ENCODE measurements at regions of chr9 and their contacts with region 1.

Region 1: DNA sequence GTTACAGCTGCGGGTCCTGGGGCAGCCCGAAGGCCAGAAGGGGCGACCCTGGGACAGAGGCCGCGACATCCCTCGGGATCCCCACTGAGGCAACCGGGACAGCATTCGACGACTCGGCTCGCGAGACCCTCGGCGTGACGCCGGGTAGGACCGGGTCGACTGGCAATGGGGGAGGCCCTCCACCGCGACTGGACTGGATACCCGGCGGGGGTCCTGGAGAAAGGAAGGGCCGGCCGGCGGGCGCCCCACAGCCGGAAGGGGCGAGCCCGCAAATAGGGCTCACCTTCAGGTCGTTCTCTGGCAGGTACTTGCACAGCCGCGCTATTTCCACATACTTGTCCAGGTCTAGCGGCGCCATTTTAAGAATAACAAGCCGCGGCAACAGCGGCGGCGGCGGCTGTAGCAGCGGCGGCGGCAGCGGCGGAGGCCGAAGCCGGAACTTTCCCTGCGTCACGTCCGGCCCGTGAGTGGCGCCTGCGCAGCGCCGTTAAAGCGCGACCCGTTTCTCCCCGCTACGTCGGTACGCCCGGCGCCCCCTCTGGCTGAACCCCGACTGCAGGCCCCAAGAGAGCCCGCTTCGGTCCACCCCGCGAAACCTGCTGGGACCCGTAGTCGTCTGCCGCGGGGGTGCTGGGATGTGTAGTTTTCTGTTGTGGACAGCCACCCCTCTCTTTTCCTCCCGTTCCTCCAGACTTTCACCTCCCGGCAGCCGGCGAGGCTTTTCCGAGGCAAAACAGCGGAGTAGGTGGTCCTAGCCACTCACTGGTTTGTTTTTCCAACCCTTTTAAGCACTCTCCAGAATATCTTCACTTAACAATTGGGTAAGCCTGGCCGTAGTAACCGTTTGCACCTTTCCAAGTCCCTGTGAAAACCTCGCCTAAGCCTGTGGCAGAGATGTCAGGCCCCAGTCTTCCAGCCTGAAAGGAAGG is at the start of gene PPP6C:
- DNase-seq: peak; percentile 95 to 98 (median 96)
- H3K4me3 ChIP-seq: peak within 1 kb of the TSS; percentile 84 to 100
- H3K4me3 Mint-ChIP-seq: peak within 1 kb of the TSS; percentile 89 to 98 (median 94)
- H3K27ac ChIP-seq: peak within 1 kb of the TSS; percentile 97
- H3K27ac Mint-ChIP-seq: peak within 1 kb of the TSS; percentile 89 to 97 (median 94)
- H3K4me1 ChIP-seq: peaks cover 81% of the 10 kb centered on the region
- H3K4me1 Mint-ChIP-seq: peaks cover 20 to 75% (median 48%) of the 10 kb centered on the region in 4 donors
- H3K27me3 ChIP-seq: no peaks in the 10 kb centered on the region
- H3K27me3 Mint-ChIP-seq: no peaks in the 10 kb centered on the region
- total RNA-seq, gene PPP6C: 49.2 TPM

Region 2: DNA sequence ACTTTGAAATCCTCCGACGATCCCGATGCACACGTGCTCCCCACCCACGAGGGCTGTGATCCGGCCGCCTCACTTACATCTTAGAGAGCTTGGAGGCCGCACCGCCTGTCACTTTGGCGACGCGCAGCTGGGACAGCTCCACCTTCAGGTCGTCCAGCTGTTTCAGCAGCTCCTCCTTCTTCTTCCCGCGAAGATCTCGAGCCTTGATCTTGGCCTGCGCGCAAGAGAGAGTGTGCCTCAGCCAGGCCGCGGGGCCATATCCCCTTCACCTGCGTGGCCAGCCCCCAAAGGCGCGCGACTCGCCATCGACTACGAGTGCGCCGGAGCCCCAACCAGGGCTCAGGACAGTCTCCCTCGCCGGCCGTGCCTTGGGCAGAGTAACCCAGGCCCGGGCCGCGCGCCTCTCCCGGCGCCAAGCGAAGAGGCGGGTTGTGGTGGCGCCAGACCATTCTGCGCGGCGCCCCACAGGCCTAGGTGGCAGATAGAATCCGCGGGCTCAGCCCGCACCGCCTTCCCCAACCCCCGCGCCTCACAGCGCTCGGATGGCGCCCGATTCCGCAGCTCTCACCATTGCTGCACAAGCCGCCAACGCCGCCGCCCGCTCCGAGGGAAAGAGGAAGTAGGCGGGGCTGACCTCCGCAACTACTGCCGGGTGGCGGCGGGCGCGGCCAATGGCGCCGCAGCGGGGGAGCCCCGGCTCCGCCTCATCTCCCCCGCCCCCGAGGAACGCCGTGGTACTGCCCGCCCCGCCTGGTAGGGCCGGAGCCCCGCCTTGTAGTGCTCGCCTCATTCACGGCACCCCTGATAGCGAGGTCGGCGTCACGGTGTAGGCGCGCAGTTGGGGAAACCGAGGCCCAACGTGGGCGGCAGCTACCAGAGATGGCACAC is 328.0 kb before region 1 on chr9 and contains the starts of genes ARPC5L and RPL35:
- CTCF ChIA-PET with region 1: no interaction called
- POLR2A ChIA-PET with region 1: interaction called, 4 read pairs
- intact Hi-C with region 1: loop called (anchors 2 kb)
- DNase-seq: peak; percentile 95 to 96 (median 95)
- H3K4me3 ChIP-seq: peak within 1 kb of the TSS; percentile 78 to 84
- H3K4me3 Mint-ChIP-seq: peak within 1 kb of the TSS; percentile 91 to 100 (median 96)
- H3K27ac ChIP-seq: peak within 1 kb of the TSS; percentile 95
- H3K27ac Mint-ChIP-seq: peak within 1 kb of the TSS; percentile 92 to 99 (median 98)
- H3K4me1 ChIP-seq: peaks cover 26% of the 10 kb centered on the region
- H3K4me1 Mint-ChIP-seq: peaks cover 20 to 41% (median 29%) of the 10 kb centered on the region in 4 donors
- H3K27me3 ChIP-seq: no peaks in the 10 kb centered on the region
- H3K27me3 Mint-ChIP-seq: no peaks in the 10 kb centered on the region
- total RNA-seq, gene ARPC5L: 26.8 to 31.4 TPM
- total RNA-seq, gene RPL35: 1,702 to 1,766 TPM

Region 3: GRCh38 chr9:125143375-125144090 is 46.1 kb before region 1 on chr9 and contains the start of gene SCAI:
- CTCF ChIA-PET with region 1: no interaction called
- POLR2A ChIA-PET with region 1: interaction called, 4 read pairs
- intact Hi-C with region 1: loop called (anchors 1 kb)
- DNase-seq: peak; percentile 97 to 99 (median 99)
- H3K4me3 ChIP-seq: peak within 1 kb of the TSS in 1 of 2 donors; percentile 49
- H3K4me3 Mint-ChIP-seq: peak within 1 kb of the TSS; percentile 93 to 99 (median 98)
- H3K27ac ChIP-seq: peak within 1 kb of the TSS; percentile 16
- H3K27ac Mint-ChIP-seq: peak within 1 kb of the TSS; percentile 85 to 95 (median 91)
- H3K4me1 ChIP-seq: peaks cover 22% of the 10 kb centered on the region
- H3K4me1 Mint-ChIP-seq: peaks cover 17 to 34% (median 26%) of the 10 kb centered on the region in 4 donors
- H3K27me3 ChIP-seq: no peaks in the 10 kb centered on the region
- H3K27me3 Mint-ChIP-seq: no peaks in the 10 kb centered on the region
- total RNA-seq, gene SCAI: 14.7 to 15.5 TPM

Region 4: DNA sequence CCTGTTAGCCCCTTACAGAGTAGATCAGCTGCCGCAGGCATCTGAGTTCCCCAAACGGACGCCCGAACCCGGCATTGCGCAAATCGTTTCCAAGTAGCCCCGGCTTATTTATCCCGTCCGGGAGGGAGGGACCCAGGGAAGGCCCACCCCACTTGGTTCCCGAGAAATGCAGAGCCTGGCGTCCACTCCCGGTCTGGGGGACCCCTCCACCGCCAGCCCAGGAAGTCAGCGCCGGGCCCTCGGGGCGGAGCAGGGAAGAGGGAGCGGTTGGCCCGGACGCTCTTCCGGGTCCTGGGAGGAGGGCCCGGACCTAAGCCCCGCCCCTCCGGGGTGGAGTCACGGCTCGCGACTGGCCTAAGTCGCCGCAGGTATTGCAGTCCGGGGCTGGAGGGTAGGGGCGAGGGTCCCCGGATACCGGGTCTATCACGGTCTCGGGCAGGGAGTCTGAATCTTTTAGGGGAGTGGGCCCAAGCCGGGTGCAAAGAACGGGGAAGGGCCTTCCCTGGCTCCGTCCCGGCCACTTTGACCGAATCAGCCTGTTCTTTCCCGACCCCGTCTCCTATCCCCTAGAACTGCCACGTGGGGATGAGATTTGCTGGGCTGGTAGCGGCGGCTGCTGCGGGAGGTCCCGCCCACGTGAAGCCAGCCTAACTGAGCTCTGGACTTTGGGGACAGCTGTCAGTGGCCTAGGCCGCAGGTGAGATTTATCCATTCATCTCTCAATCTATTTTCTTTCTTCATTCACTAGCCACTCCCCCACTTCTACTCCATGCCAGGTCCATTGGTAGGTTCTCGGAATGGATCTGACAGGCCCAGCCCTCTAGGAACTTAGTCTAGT is 10.8 kb after region 1 on chr9 and contains the start of gene RABEPK:
- CTCF ChIA-PET with region 1: interaction called, 20 read pairs
- POLR2A ChIA-PET with region 1: interaction called, 34 read pairs
- intact Hi-C with region 1: no loop called
- DNase-seq: peak; percentile 83 to 88 (median 86)
- H3K4me3 ChIP-seq: peak within 1 kb of the TSS; percentile 81 to 90
- H3K4me3 Mint-ChIP-seq: peak within 1 kb of the TSS; percentile 91 to 98 (median 93)
- H3K27ac ChIP-seq: peak within 1 kb of the TSS; percentile 80
- H3K27ac Mint-ChIP-seq: peak within 1 kb of the TSS; percentile 92 to 96 (median 94)
- H3K4me1 ChIP-seq: peaks cover 41% of the 10 kb centered on the region
- H3K4me1 Mint-ChIP-seq: peaks cover 29 to 50% (median 35%) of the 10 kb centered on the region in 4 donors
- H3K27me3 ChIP-seq: no peaks in the 10 kb centered on the region
- H3K27me3 Mint-ChIP-seq: no peaks in the 10 kb centered on the region
- total RNA-seq, gene RABEPK: 12.2 to 13.5 TPM

Region 5: GRCh38 chr9:125261501-125262293 is 72.1 kb after region 1 on chr9 and contains the start of gene GAPVD1:
- CTCF ChIA-PET with region 1: no interaction called
- POLR2A ChIA-PET with region 1: interaction called, 6 read pairs
- intact Hi-C with region 1: loop called (anchors 1 kb)
- DNase-seq: peak; percentile 86 to 91 (median 87)
- H3K4me3 ChIP-seq: peak within 1 kb of the TSS; percentile 72 to 94
- H3K4me3 Mint-ChIP-seq: peak within 1 kb of the TSS; percentile 94 to 98 (median 97)
- H3K27ac ChIP-seq: peak within 1 kb of the TSS; percentile 81
- H3K27ac Mint-ChIP-seq: peak within 1 kb of the TSS; percentile 87 to 98 (median 97)
- H3K4me1 ChIP-seq: peaks cover 33% of the 10 kb centered on the region
- H3K4me1 Mint-ChIP-seq: peaks cover 28 to 53% (median 40%) of the 10 kb centered on the region in 4 donors
- H3K27me3 ChIP-seq: no peaks in the 10 kb centered on the region
- H3K27me3 Mint-ChIP-seq: no peaks in the 10 kb centered on the region
- total RNA-seq, gene GAPVD1: 67.8 to 76.4 TPM

Measured in CD4-positive, alpha-beta memory T cell (primary cell).